MCF 10A (cell line): ENCODE measurements at regions of chr20 and their contacts with region 1.

Region 1: DNA sequence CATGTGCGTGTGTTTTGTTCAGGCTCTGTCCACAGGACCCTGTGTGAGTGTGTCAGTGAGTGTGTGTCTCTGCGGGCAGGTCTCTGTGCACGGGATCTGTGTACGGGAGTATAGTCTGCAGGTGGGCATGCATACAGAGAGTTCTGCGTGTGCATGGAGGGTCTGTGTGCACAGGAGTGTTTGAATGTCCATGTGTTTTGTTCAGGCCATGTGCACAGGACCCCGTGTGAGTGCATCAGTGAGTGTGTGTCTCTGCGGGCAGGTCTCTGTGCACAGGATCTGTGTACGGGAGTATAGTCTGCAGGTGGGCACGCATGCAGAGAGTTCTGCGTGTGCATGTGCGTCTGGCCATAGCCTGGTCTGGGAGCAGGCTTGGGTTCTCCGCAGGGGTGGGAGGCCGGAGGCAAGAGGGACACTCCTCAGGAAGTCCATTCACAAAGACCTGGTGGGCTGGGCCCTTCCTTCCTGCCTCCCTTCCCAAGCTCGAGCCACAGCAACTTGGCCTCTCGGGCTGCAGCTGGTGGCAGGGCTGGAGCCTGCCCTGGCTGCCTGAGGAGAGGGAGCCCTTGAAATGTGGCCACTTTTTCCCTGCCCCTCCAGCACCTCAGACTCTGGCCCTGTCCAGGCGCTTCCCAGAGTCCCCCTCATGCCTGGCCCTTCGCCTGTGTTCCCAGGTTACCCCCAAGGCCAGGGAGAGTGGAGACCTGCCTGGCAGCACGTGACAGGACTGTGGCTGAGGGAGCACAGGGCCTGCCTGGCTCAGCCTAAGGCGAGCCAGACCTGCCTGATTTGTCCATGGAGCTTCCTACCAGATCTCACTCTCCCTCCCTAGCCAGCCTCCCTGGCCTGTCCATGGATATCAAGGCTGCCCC is 6.8 kb downstream of the HSPA12B start:
- DNase-seq: no peak
- H3K4me3 Mint-ChIP-seq: no peak overlapping the region
- H3K27ac Mint-ChIP-seq: no peak overlapping the region
- H3K4me1 Mint-ChIP-seq: peaks cover 4% of the 10 kb centered on the region
- H3K27me3 Mint-ChIP-seq: peaks cover 5% of the 10 kb centered on the region
- CTCF ChIP-seq: no peak

Region 2: DNA sequence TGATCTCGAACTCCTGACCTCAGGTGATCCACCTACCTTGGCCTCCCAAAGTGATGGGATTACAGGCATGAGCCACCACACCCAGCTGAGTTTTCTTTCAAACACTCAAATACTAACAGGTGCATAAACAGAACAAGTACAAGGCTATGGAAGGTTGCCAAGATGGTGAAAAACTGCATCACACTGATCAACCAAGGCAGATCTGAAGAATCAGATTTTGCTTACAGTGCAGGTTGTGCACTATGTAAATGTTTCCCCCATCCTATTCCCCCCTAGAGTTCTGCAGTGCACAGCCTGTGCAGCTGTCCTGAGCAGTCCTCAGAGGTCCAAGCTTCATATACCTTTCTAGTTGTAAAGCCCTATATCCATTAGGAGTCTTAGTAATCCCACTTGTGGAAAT is 149.1 kb before region 1 on chr20:
- CTCF ChIA-PET with region 1: no interaction called
- POLR2A ChIA-PET with region 1: no interaction called
- intact Hi-C with region 1: no loop called
- DNase-seq: no peak
- H3K4me3 Mint-ChIP-seq: no peak overlapping the region
- H3K27ac Mint-ChIP-seq: no peak overlapping the region
- H3K4me1 Mint-ChIP-seq: no peaks in the 10 kb centered on the region
- H3K27me3 Mint-ChIP-seq: no peaks in the 10 kb centered on the region
- CTCF ChIP-seq: no peak

Region 3: DNA sequence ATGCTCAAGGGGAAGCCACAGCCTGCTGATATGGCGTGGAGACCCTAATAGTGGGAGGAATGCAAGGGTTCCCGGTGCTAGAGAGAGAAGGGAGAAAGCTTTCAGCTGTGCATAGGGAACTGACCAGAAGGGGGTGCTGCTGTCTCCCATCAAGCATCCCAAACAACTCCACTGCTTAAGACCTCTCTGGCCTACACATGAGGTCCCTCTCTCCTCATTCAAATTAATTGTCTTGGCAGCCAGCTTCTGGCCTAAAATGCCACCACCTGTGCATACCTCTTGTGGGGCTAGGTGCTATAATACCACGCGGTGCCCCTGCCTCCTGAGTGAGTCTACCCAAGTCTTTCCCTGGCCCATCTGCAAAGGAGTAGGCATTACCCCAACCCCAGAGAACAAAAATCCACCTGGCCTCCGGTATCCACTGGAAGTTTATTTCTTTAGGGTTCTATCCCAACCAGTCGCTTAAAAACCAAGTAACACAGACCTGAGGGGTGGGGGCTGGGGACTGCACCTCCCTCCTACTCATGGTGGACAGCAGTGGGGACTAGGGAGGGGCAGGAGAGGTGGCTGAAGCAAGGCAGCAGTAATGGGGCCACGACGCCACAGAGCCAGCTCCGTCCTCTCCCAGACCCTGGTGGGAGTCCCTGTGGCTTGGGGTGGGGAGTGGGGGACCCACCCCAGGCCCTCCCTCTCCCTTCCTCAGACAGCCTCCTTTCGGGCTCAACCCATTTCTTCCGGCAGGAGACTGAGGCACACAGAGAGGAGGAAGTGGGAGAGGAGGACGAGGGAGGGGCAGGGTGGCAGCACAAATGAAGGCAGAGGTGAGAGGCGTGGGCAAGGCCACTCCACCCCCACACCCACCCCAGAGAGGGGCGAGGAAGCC is 14.0 kb after region 1 on chr20:
- CTCF ChIA-PET with region 1: interaction called, 11 read pairs
- POLR2A ChIA-PET with region 1: interaction called, 6 read pairs
- intact Hi-C with region 1: no loop called
- DNase-seq: peak; percentile 72
- H3K4me3 Mint-ChIP-seq: no peak overlapping the region
- H3K27ac Mint-ChIP-seq: no peak overlapping the region
- H3K4me1 Mint-ChIP-seq: no peaks in the 10 kb centered on the region
- H3K27me3 Mint-ChIP-seq: no peaks in the 10 kb centered on the region
- CTCF ChIP-seq: peak; percentile 78